PC-3 (cell line): ENCODE measurements at regions of chr14 and their contacts with region 1.

Region 1: GRCh38 chr14:35046048-35046741 is at the start of gene FAM177A1:
- DNase-seq: peak; percentile 96
- ATAC-seq: peak; percentile 87
- H3K4me3 ChIP-seq: peak within 1 kb of the TSS; percentile 87
- H3K27ac ChIP-seq: peak within 1 kb of the TSS; percentile 75
- H3K4me1 ChIP-seq: peaks cover 32% of the 10 kb centered on the region
- H3K27me3 ChIP-seq: no peaks in the 10 kb centered on the region
- CTCF ChIP-seq: no peak
- total RNA-seq, gene FAM177A1: 36.2 and 62.8 TPM in 2 replicates

Region 2: DNA sequence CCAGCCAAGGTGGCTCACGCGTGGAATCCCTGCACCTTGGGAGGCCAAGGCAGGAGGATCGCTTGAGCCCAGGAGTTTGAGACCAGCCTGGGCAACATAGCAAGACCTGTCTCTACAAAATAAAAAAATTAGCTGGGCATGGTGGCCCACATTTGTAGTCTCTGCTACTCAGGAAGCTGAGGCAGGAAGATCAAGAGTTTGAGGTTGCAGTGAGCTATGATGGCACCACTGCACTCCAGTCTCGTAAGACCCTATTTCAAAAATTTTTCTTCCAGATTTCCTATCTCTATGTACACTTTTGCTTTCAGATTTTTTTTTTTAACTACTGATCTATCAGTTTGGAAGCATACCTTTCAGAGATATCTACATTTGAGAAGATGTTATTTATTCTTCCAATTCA is 431.6 kb before region 1 on chr14:
- CTCF ChIA-PET with region 1: no interaction called
- POLR2A ChIA-PET with region 1: interaction called, 10 read pairs
- intact Hi-C with region 1: no loop called
- DNase-seq: no peak
- ATAC-seq: no peak
- H3K4me3 ChIP-seq: no peak overlapping the region
- H3K27ac ChIP-seq: no peak overlapping the region
- H3K4me1 ChIP-seq: no peaks in the 10 kb centered on the region
- H3K27me3 ChIP-seq: no peaks in the 10 kb centered on the region
- CTCF ChIP-seq: no peak

Region 3: GRCh38 chr14:34982417-34983147 is 63.6 kb before region 1 on chr14 and contains the start of gene SRP54:
- CTCF ChIA-PET with region 1: interaction called, 3 read pairs
- POLR2A ChIA-PET with region 1: interaction called, 9 read pairs
- intact Hi-C with region 1: loop called (anchors 1 kb)
- DNase-seq: peak; percentile 97
- ATAC-seq: peak; percentile 75
- H3K4me3 ChIP-seq: peak within 1 kb of the TSS; percentile 78
- H3K27ac ChIP-seq: peak within 1 kb of the TSS; percentile 93
- H3K4me1 ChIP-seq: peaks cover 19% of the 10 kb centered on the region
- H3K27me3 ChIP-seq: no peaks in the 10 kb centered on the region
- CTCF ChIP-seq: 0 out of 2 replicates have a peak, but pooled peaks have one; percentile 6
- total RNA-seq, gene SRP54: 49.3 and 75.5 TPM in 2 replicates

Region 4: DNA sequence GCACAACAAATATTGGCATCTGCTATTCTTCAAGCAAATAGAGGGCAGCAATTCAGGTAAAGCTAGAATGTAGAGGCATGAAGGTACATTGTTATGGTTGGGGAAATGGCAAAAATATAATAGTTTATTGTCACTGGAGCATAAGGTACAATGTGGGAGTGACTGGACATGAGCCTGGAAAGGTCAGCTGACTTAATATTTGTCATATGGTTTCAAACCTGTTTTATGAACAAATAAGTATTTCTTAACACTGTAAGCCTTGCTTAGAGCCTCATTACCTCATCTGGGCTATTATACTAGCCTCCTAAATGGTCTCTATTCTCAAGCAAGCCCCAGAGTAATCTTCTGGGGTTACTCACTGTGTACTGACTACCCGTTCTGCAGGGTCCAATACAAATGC is 33.5 kb after region 1 on chr14:
- CTCF ChIA-PET with region 1: interaction called, 3 read pairs
- POLR2A ChIA-PET with region 1: no interaction called
- intact Hi-C with region 1: loop called (anchors 5 kb)
- DNase-seq: peak; percentile 30
- ATAC-seq: peak; percentile 66
- H3K4me3 ChIP-seq: no peak overlapping the region
- H3K27ac ChIP-seq: no peak overlapping the region
- H3K4me1 ChIP-seq: no peaks in the 10 kb centered on the region
- H3K27me3 ChIP-seq: no peaks in the 10 kb centered on the region
- CTCF ChIP-seq: no peak

Region 5: DNA sequence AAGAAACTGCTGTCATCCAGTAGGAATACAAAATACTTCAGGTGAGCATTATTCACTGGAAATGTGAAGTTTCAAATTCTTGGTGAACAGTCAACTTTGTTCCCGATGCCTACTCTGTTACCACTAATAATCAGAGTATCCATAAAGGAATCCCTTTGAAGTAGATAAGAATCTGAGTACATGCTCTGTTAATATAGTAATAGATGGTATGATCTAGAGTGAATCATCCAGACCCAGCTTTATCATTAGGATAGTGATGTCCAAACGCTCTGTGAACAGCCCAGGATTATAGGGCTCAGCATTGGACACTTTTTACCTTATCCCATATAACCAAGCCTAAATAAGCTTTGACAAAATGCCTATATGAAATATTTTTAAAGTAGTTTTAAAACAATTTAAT is 42.3 kb after region 1 on chr14:
- CTCF ChIA-PET with region 1: no interaction called
- POLR2A ChIA-PET with region 1: interaction called, 11 read pairs
- intact Hi-C with region 1: loop called (anchors 5 kb)
- DNase-seq: peak; percentile 4
- ATAC-seq: peak; percentile 42; the same call in 1 of the 2 replicates
- H3K4me3 ChIP-seq: no peak overlapping the region
- H3K27ac ChIP-seq: no peak overlapping the region
- H3K4me1 ChIP-seq: no peaks in the 10 kb centered on the region
- H3K27me3 ChIP-seq: no peaks in the 10 kb centered on the region
- CTCF ChIP-seq: no peak

Region 6: DNA sequence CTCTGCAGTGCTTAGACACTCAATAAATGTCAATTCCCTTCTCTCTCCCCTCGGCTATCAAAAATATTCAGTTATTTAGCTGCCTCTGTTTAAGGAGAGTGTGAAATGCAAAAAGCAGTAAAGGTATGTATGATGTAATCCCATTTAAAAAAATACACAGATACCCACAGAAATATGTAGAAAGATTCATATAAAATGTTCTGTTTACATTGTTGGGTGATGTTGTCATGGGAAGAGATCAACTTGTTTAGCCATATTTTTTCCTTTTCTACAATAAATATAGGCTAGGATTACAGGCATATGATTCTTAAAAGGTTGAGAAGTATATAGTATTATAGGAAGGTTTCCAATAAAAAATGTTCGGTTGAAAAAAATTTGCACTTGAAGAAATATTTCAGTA is 67.8 kb after region 1 on chr14:
- CTCF ChIA-PET with region 1: no interaction called
- POLR2A ChIA-PET with region 1: interaction called, 13 read pairs
- intact Hi-C with region 1: no loop called
- DNase-seq: peak; percentile 46
- ATAC-seq: peak; percentile 82
- H3K4me3 ChIP-seq: no peak overlapping the region
- H3K27ac ChIP-seq: no peak overlapping the region
- H3K4me1 ChIP-seq: peaks cover 3% of the 10 kb centered on the region; the same call in 1 of the 2 replicates
- H3K27me3 ChIP-seq: no peaks in the 10 kb centered on the region
- CTCF ChIP-seq: no peak

Region 7: DNA sequence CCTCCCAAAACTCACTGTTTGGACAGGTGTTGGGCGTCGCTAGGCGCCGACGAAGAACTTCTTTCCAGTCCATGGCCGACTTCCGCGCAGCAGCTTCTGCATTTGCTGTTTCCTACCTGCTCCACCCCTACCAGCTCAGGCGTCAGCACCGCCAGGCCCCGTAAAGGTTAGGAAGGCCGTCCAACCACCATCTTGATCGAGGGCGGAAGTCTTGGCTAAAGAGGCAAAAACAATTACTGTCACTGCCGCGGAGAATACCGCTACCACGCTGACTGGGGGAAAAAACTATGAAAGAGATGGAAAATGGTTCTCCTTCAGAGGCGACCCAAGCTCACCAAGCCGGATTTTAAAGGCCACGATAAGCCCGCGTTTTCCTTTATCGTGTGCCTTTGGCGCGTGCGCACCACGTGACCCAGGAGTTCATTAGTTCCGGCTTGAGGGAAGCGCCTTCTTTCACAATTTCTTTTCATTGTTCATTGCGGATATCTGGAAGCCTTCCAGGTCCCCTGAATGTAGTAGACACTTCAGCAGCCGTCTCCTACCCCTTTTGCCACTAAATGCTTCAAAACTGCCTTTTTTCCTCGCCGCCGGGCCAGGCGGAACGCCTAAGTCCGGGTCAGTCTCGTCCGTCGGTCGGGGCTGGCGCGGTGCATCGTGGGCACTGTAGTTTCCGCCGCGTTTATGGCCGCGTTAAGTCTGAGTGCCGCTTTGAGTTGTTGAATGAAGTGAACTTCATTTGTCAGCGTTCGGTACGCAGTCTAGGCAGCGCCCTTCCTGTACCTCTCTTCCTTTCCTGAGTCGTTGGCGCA is 75.9 kb after region 1 on chr14 and contains the starts of genes PPP2R3C and PRORP:
- CTCF ChIA-PET with region 1: no interaction called
- POLR2A ChIA-PET with region 1: interaction called, 4 read pairs
- intact Hi-C with region 1: loop called (anchors 1 kb)
- DNase-seq: peak; percentile 98
- ATAC-seq: peak; percentile 85
- H3K4me3 ChIP-seq: peak within 1 kb of the TSS; percentile 83
- H3K27ac ChIP-seq: peak within 1 kb of the TSS; percentile 92
- H3K4me1 ChIP-seq: peaks cover 13% of the 10 kb centered on the region
- H3K27me3 ChIP-seq: no peaks in the 10 kb centered on the region
- CTCF ChIP-seq: no peak
- total RNA-seq, gene PPP2R3C: 15.2 and 20.3 TPM in 2 replicates
- total RNA-seq, gene PRORP: 25.1 and 25.3 TPM in 2 replicates